ENCODE measurements at regions of chr1 and their contacts with region 1.

Region 1: DNA sequence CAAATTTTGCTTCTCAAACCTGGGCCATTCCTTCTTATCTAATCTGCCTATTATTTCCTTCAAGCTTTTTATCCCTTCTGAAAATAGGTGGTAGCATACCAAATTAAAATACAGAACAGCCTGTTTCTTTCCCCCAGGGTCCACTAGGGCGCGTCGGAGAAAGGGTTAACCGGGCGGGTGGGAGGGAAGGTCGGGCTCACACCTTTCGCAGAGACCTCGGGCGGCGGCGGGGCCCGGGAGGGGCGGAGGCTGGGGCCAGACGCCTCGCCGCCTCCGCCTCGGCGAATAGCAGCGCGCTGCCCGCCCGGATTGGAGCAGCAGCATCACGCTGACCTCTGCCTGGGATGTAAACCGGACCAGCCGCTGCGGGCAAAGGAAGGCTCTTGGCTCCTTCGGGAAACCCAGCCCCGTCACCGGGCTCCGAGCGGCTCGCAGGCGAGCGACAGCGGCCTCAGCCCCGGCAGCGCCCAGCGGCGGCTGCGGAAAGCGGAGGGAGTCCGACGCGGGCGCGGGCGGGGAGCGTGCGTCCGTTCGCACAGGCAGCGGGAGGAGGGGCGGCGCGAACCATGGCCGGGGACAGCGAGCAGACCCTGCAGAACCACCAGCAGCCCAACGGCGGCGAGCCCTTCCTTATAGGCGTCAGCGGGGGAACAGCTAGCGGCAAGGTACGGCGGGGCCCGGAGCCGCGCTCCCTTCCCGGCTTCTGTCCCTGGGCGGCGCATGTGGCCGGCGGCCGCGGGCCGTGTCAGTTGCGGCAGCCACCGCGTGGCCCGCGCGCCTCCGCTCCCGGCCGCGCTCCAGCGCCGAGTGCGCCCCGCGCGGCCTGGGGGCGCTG is at the start of gene UCK2:
- DNase-seq: peak; percentile 76
- ATAC-seq: peak; percentile 88
- H3K4me3 ChIP-seq: peak within 1 kb of the TSS; percentile 93
- H3K27ac ChIP-seq: peak within 1 kb of the TSS; percentile 85
- H3K4me1 ChIP-seq: no peaks in the 10 kb centered on the region
- H3K27me3 ChIP-seq: no peaks in the 10 kb centered on the region
- CTCF ChIP-seq: peak; percentile 29
- POLR2A ChIP-seq: peak; percentile 91
- RAD21 ChIP-seq: no peak
- total RNA-seq, gene UCK2: 74.2 and 87.8 TPM in 2 replicates

Region 2: DNA sequence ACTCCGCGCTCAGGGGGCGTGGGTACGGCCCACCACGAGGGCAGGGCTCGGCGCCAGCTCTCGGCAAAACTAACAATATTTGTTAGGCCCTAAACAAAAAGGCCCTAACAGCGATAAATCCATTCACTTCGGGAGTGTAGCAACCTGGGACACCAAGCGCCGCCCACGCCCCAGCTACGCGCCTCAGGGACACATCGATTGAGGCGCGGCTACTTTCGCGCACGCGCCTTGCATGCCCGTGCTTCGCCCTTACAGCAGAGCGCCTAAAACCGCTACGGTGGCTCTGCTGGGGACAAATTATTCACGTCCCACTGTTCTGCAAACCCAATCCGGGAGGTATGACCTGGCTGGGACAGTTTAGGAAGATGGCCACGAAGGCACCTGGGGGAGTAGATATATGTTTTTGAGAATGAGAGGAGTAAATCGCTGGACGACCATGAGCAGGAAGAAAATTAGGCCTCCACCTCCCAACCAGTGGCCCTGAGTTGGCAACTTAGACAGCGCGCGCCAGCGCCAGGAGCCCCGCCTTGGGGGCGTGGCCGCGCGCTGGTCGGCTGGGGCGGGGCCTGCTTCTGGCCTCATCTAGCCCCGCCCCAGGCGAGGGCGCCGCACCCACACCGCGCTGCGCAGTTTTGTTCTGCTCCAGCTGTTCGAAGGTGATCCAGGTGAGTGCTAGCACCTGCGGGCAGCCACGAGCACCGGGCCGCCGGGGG is 196.7 kb before region 1 on chr1 and contains the start of gene MGST3:
- CTCF ChIA-PET with region 1: no interaction called
- POLR2A ChIA-PET with region 1: no interaction called
- dilution Hi-C with region 1: no loop called
- in situ Hi-C with region 1: no loop called
- intact Hi-C with region 1: loop called (anchors 10 kb)
- DNase-seq: peak; percentile 95
- ATAC-seq: peak; percentile 93
- H3K4me3 ChIP-seq: peak within 1 kb of the TSS; percentile 74
- H3K27ac ChIP-seq: peak within 1 kb of the TSS; percentile 88
- H3K4me1 ChIP-seq: peaks cover 2% of the 10 kb centered on the region
- H3K27me3 ChIP-seq: no peaks in the 10 kb centered on the region
- CTCF ChIP-seq: no peak
- POLR2A ChIP-seq: peak; percentile 42; the same call in 1 of the 2 replicates
- RAD21 ChIP-seq: no peak
- total RNA-seq, gene MGST3: 132 and 159 TPM in 2 replicates

Region 3: GRCh38 chr1:165659581-165659895 is 167.9 kb before region 1 on chr1:
- CTCF ChIA-PET with region 1: no interaction called
- POLR2A ChIA-PET with region 1: no interaction called
- dilution Hi-C with region 1: no loop called
- in situ Hi-C with region 1: no loop called
- intact Hi-C with region 1: no loop called
- DNase-seq: no peak
- ATAC-seq: peak; percentile 38
- H3K4me3 ChIP-seq: no peak overlapping the region
- H3K27ac ChIP-seq: no peak overlapping the region
- H3K4me1 ChIP-seq: no peaks in the 10 kb centered on the region
- H3K27me3 ChIP-seq: no peaks in the 10 kb centered on the region
- CTCF ChIP-seq: no peak
- POLR2A ChIP-seq: no peak
- RAD21 ChIP-seq: no peak

Region 4: DNA sequence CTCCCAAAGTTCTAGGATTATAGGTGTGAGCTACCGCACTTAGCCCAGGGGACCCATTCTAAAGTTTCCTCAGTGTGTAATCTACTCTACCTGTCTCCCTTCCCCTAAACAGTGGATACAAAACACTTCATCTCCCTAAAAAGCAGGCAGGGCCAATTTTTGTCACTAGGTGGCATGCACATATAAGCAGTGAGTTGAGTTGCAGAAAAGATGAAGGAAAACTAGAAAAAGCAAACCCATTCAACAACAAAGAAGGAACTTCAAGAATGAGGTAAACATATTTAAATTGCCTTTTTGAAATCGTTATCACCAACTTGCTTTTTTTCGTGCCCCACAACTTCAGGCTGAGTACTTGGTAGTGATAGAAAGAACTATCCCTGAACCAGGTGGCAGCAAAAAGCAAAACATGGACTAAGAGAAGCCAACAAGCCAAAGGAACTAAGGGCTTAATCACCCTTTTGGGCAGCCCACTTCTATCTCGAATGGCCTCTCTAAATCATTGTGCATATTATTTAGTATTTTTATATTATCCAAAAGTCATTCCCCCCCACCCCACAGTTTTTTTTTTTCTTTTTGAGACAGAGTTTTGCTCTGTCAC is 109.5 kb before region 1 on chr1:
- CTCF ChIA-PET with region 1: no interaction called
- POLR2A ChIA-PET with region 1: no interaction called
- dilution Hi-C with region 1: no loop called
- in situ Hi-C with region 1: no loop called
- intact Hi-C with region 1: loop called (anchors 5 kb)
- DNase-seq: peak; percentile 71
- ATAC-seq: peak; percentile 92
- H3K4me3 ChIP-seq: no peak overlapping the region
- H3K27ac ChIP-seq: no peak overlapping the region
- H3K4me1 ChIP-seq: no peaks in the 10 kb centered on the region
- H3K27me3 ChIP-seq: no peaks in the 10 kb centered on the region
- CTCF ChIP-seq: peak; percentile 87
- POLR2A ChIP-seq: no peak
- RAD21 ChIP-seq: peak; percentile 94

Region 5: DNA sequence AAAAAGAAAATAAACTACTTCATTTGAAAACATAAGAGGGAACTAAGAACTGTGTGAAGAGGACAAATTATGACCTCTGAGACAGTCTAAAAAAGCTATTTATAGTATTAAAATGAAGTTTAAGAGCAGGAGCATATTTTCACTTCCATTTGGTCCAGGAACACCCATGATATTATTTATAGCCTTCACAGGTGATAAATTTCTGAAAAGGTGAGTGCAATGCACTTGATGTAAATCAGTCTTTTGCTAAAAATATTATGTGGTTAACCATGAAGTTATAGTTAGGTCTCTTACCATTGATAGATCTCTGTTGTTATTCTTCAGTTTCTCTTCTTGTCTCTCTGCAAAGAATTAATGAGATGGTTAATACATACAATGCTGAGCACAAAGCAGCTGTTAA is 73.6 kb before region 1 on chr1:
- CTCF ChIA-PET with region 1: no interaction called
- POLR2A ChIA-PET with region 1: no interaction called
- dilution Hi-C with region 1: no loop called
- in situ Hi-C with region 1: no loop called
- intact Hi-C with region 1: no loop called
- DNase-seq: no peak
- ATAC-seq: no peak
- H3K4me3 ChIP-seq: no peak overlapping the region
- H3K27ac ChIP-seq: no peak overlapping the region
- H3K4me1 ChIP-seq: no peaks in the 10 kb centered on the region
- H3K27me3 ChIP-seq: no peaks in the 10 kb centered on the region
- CTCF ChIP-seq: no peak
- POLR2A ChIP-seq: no peak
- RAD21 ChIP-seq: no peak

Region 6: DNA sequence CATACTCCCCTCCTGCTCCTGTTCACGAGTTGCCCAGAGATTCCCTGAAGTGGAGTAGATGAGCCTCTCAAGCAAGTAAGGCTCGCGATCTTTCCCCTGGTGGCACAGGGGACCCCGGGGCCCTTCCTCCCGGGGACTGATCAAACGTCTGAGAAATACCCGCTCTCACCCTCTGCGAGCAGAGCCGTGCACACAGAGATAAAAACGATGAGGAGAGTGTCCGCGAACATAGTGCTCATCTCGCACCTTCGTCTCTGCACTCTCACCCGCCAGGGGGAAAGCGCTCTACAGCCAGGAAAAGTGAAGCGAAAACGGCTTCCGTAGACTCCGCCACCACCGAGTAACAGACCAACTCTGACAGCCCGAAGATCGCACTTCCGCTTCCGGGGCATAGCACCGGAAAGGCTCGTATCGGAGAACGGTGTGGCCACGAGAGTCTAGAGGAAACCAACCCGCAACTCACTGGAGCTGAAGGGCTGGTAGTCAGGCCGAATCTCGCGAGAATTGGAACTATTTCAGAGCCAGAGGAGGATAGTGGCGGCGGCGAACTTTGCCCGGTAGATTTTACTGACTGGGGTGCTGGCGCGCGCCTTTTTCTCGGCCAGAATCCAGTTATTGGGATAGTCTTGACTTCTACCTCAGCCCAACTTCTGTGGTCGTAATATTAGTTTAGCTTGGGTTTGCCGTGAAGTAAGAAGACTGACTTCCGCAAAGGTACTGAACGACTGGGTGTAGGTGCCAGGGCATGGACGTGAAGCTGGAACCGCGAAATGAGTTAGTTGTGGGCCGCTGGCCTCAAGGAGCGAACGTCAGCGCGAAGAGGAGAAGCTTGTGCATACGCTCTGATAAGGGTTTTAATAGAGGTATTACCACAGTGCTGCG is 58.7 kb before region 1 on chr1 and contains the start of gene TMCO1:
- CTCF ChIA-PET with region 1: no interaction called
- POLR2A ChIA-PET with region 1: no interaction called
- dilution Hi-C with region 1: no loop called
- in situ Hi-C with region 1: loop called (anchors 5 kb)
- intact Hi-C with region 1: loop called (anchors 1 kb)
- DNase-seq: peak; percentile 99
- ATAC-seq: peak; percentile 91
- H3K4me3 ChIP-seq: peak within 1 kb of the TSS; percentile 80
- H3K27ac ChIP-seq: peak within 1 kb of the TSS; percentile 95
- H3K4me1 ChIP-seq: peaks cover 7% of the 10 kb centered on the region
- H3K27me3 ChIP-seq: no peaks in the 10 kb centered on the region
- CTCF ChIP-seq: peak; percentile 22
- POLR2A ChIP-seq: peak; percentile 91
- RAD21 ChIP-seq: peak; percentile 44
- total RNA-seq, gene TMCO1: 86.4 and 121 TPM in 2 replicates

Region 7: GRCh38 chr1:165898837-165899236 is 71.4 kb after region 1 on chr1:
- CTCF ChIA-PET with region 1: no interaction called
- POLR2A ChIA-PET with region 1: interaction called, 6 read pairs
- dilution Hi-C with region 1: no loop called
- in situ Hi-C with region 1: no loop called
- intact Hi-C with region 1: loop called (anchors 1 kb)
- DNase-seq: peak; percentile 100
- ATAC-seq: peak; percentile 72
- H3K4me3 ChIP-seq: no peak overlapping the region
- H3K27ac ChIP-seq: peak overlapping the region; percentile 97
- H3K4me1 ChIP-seq: peaks cover 62% of the 10 kb centered on the region
- H3K27me3 ChIP-seq: no peaks in the 10 kb centered on the region
- CTCF ChIP-seq: no peak
- POLR2A ChIP-seq: peak; percentile 59; the same call in 1 of the 2 replicates
- RAD21 ChIP-seq: no peak; the same call in none of the 2 replicates

Region 8: GRCh38 chr1:165914136-165914798 is 86.8 kb after region 1 on chr1:
- CTCF ChIA-PET with region 1: no interaction called
- POLR2A ChIA-PET with region 1: no interaction called
- dilution Hi-C with region 1: no loop called
- in situ Hi-C with region 1: no loop called
- intact Hi-C with region 1: loop called (anchors 1 kb)
- DNase-seq: peak; percentile 88
- ATAC-seq: peak; percentile 89
- H3K4me3 ChIP-seq: no peak overlapping the region
- H3K27ac ChIP-seq: no peak overlapping the region
- H3K4me1 ChIP-seq: peaks cover 5% of the 10 kb centered on the region
- H3K27me3 ChIP-seq: no peaks in the 10 kb centered on the region
- CTCF ChIP-seq: peak; percentile 96
- POLR2A ChIP-seq: peak; percentile 57
- RAD21 ChIP-seq: peak; percentile 100

Measured in IMR-90 (cell line).